A549 (cell line): ENCODE measurements at regions of chr5 and their contacts with region 1.

Region 1: GRCh38 chr5:143217065-143217803 is 186.3 kb downstream of the NR3C1 start:
- DNase-seq: no peak
- ATAC-seq: peak; percentile 33 to 72; a peak in 3 of 6 replicates
- H3K4me3 ChIP-seq: no peak overlapping the region
- H3K27ac ChIP-seq: peak overlapping the region; percentile 25 to 61
- H3K4me1 ChIP-seq: peaks cover 28% of the 10 kb centered on the region
- CTCF ChIP-seq: no peak; the same call in 2 of the 3 replicates
- EP300 ChIP-seq: no peak
- POLR2A ChIP-seq: no peak
- RAD21 ChIP-seq: peak; percentile 36 to 60; a peak in 4 of 5 replicates

Region 2: DNA sequence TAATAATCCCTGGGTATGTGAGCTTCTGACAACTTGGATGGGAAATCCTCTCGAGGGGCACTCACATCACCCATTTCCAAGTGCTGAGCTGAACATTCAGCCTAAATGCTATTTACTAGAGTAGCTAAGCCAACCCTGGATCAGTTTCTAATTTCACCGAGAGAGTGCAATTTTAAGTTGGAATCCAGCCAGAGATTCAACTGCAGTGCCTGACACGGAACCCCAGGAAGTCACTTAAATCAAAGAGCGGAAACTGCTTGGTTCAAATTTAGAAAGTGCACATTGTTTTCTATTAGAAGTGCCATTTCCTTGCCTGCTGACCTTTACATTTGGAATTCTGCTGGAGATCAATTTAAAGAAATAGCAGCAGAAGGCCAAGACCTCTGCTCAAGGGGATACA is 901.2 kb before region 1 on chr5:
- CTCF ChIA-PET with region 1: no interaction called
- POLR2A ChIA-PET with region 1: no interaction called
- DNase-seq: no peak
- ATAC-seq: no peak
- H3K4me3 ChIP-seq: no peak overlapping the region
- H3K27ac ChIP-seq: no peak overlapping the region
- H3K4me1 ChIP-seq: peaks cover 17% of the 10 kb centered on the region
- CTCF ChIP-seq: no peak
- EP300 ChIP-seq: no peak
- POLR2A ChIP-seq: no peak
- RAD21 ChIP-seq: no peak

Region 3: DNA sequence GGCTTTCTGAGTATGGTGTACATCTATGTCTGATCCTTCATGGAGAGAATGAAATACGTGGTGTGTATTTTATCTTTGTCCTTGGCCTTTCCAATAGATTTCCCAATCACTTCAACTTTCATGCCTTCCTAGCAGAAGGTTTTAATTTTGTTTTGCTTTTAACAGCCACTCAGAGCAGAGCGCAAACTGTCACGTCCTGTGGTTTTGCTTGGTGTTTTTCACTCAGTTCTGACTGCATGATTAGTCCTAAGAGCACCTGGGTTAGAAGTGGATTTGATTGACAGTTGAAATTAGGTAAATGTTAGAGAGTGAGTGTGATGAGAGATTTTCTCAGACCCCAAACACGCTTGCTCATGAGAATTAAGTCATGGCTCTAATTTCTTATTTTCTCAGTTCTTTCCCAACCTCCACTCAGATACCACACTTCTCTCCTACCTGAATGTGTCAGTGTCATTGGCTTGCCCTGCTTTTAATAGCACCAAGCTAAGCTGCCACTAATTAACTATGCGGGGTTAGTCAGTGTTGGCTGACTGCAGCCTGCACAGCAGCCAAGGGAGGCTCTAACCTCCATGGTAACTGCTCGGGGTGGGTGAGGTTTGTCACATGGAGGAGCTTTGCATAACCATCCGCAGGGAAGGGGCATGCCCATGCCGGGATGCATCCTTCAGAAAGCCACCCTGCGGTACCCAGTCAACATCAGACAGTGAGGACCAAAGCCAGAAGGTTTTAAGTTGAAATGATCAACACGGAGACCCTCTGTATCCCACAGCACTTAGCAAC is 12.9 kb after region 1 on chr5:
- CTCF ChIA-PET with region 1: interaction called, 25 read pairs
- POLR2A ChIA-PET with region 1: no interaction called
- DNase-seq: no peak
- ATAC-seq: no peak
- H3K4me3 ChIP-seq: no peak overlapping the region
- H3K27ac ChIP-seq: peak overlapping the region in 1 of 2 experiments; percentile 50; a peak in 2 of 6 replicates
- H3K4me1 ChIP-seq: peaks cover 31% of the 10 kb centered on the region
- CTCF ChIP-seq: no peak
- EP300 ChIP-seq: no peak
- POLR2A ChIP-seq: no peak
- RAD21 ChIP-seq: no peak

Region 4: GRCh38 chr5:143573568-143574170 is 356.4 kb after region 1 on chr5:
- CTCF ChIA-PET with region 1: no interaction called
- POLR2A ChIA-PET with region 1: no interaction called
- DNase-seq: no peak
- ATAC-seq: no peak
- H3K4me3 ChIP-seq: no peak overlapping the region
- H3K27ac ChIP-seq: peak overlapping the region in 1 of 2 experiments; percentile 27; a peak in 3 of 6 replicates
- H3K4me1 ChIP-seq: peaks cover 19% of the 10 kb centered on the region; the same call in 2 of the 3 replicates
- CTCF ChIP-seq: no peak
- EP300 ChIP-seq: no peak
- POLR2A ChIP-seq: no peak
- RAD21 ChIP-seq: no peak

Region 5: GRCh38 chr5:143673676-143674447 is 456.6 kb after region 1 on chr5:
- CTCF ChIA-PET with region 1: no interaction called
- POLR2A ChIA-PET with region 1: no interaction called
- DNase-seq: peak in 1 of 2 experiments; percentile 75
- ATAC-seq: peak; percentile 72 to 91
- H3K4me3 ChIP-seq: no peak overlapping the region
- H3K27ac ChIP-seq: peak overlapping the region; percentile 71 to 74
- H3K4me1 ChIP-seq: peaks cover 51% of the 10 kb centered on the region
- CTCF ChIP-seq: no peak
- EP300 ChIP-seq: peak; percentile 25 to 26; a peak in 1 of 5 replicates
- POLR2A ChIP-seq: no peak
- RAD21 ChIP-seq: peak; percentile 24 to 39; a peak in 3 of 5 replicates